Head of caudate nucleus (tissue), 42 donors: ENCODE measurements at regions of chr11 and their contacts with region 1.

Region 1: DNA sequence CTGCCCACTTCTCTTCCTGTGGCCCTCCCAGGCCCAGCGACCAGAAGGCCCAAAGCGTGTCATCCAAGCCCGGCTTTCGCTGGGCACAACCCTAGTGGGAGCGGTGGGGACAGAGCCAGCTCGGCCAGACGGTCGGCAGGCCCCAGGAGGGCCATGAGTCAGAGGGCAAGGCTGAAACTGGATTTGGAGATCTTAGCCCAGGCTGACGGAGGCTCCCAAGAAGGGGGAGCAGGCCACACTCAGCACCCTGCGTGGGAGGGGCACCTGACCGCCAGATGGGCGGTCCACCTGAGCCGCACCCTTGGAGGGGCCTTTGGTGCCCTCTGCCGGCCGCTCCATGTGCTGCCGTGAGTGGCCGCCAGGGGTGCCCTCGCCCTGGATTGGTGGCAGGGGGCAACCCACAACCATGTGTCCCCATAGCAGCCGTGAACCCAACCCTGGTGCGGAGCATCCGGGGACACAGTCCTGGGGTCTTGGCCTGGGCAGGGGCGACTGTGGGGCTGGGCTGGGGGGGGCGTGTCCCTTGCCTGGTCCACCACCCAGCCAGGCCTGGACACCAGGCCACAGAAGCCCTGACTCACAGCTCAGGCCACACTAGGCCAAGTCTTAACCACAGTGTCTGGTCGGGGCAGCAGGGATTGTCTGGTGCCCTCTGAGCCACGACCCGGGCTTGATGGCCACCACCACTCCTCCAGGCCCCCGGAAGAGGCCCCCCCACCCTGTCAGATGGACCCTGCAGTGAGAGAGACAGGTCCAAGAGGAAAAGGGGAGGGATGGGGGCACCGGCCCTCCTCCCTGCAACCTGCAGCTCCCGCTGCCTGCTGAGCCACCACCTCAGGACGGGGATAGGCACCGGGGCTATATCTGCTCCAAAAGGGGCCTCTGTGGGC is 19.2 kb upstream of the TALDO1 start:
- DNase-seq: peak; percentile 61 to 94 (median 81)

Region 2: DNA sequence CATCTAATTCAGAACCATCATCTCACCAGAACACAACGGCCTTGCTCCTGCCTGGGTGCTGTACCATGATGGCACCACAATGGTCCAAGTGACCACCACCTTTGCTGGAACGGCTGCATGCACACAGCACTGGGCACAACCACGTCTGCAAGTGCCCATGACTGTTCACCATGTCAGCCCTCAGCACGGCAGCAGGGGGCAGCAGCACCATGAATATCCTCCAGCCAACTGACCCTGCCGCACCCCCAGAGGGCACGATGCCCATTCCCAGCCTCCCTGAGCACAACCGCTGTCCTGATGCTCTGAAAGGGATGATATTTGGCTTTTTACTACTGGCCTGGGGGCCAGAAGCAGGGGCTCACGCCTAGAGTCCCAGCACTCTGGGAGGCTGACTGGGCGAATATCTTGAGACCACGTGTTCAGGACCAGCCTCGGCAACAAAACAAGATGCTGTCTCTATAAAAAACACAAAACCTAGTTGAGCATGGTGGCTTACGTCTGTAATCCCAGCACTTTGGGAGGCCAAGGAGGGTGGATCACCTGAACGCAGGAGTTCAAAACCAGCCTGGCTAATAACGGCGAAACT is 65.3 kb before region 1 on chr11:
- intact Hi-C with region 1: loop called (anchors 5 kb)
- DNase-seq: peak; percentile 49 to 90 (median 76)

Region 3: DNA sequence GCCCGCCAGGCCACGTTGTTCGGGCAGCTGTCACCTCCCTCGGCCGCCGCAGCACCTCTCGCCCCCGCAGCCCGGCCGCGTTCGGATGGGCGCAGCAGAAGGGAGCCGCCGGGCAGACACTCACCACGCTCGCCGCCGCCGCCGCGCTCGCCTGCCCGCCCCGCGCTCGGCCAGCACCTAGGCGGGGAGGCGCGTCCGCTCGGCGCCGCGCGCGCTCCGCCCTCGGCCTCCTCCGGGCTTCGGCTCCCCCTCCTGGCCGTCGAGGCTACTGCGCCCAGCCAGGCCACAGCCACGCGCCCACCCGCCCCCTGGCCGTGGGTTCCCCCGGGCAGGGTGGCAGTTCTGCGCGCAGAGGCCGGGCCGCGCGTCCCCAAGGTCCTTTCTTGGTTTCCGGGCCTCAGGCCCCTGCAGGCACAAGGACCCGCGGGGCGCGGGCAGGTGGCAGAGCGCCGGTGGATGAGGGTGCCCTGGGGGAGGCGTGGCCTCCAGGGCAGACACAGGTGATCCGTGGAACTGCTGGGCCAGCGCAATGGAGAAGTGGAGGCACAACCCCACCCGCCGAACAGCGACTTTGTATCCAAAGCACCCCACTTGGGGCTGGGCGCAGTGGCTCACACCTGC is 70.1 kb after region 1 on chr11 and contains the start of gene SLC25A22:
- intact Hi-C with region 1: loop called (anchors 5 kb)
- DNase-seq: peak in 40 of 42 donors; percentile 62 to 91 (median 82)